Panc1 (cell line): ENCODE measurements at regions of chr3 and their contacts with region 1.

Region 1: GRCh38 chr3:184417619-184418327 is 37.9 kb downstream of the CHRD start:
- DNase-seq: peak; percentile 22
- ATAC-seq: peak; percentile 93
- H3K4me3 ChIP-seq: no peak overlapping the region
- H3K27ac ChIP-seq: no peak overlapping the region
- H3K4me1 ChIP-seq: no peaks in the 10 kb centered on the region
- H3K27me3 ChIP-seq: no peaks in the 10 kb centered on the region
- CTCF ChIP-seq: peak; percentile 98

Region 2: GRCh38 chr3:184405075-184406030 is 12.4 kb before region 1 on chr3:
- CTCF ChIA-PET with region 1: no interaction called
- POLR2A ChIA-PET with region 1: no interaction called
- in situ Hi-C with region 1: no loop called
- intact Hi-C with region 1: no loop called
- DNase-seq: no peak
- ATAC-seq: peak; percentile 23; the same call in 1 of the 2 replicates
- H3K4me3 ChIP-seq: no peak overlapping the region
- H3K27ac ChIP-seq: no peak overlapping the region
- H3K4me1 ChIP-seq: no peaks in the 10 kb centered on the region
- H3K27me3 ChIP-seq: peaks cover 2% of the 10 kb centered on the region; the same call in 1 of the 2 replicates
- CTCF ChIP-seq: no peak

Region 3: GRCh38 chr3:184513276-184514170 is 95.8 kb after region 1 on chr3:
- CTCF ChIA-PET with region 1: interaction called, 5 read pairs
- POLR2A ChIA-PET with region 1: no interaction called
- in situ Hi-C with region 1: no loop called
- intact Hi-C with region 1: loop called (anchors 1 kb)
- DNase-seq: peak; percentile 46
- ATAC-seq: peak; percentile 99
- H3K4me3 ChIP-seq: peak overlapping the region; percentile 31 to 50
- H3K27ac ChIP-seq: no peak overlapping the region
- H3K4me1 ChIP-seq: 0 out of 2 replicates have a peak, but pooled peaks cover 2% of the 10 kb centered on the region
- H3K27me3 ChIP-seq: peaks cover 58% of the 10 kb centered on the region
- CTCF ChIP-seq: peak; percentile 98

Region 4: DNA sequence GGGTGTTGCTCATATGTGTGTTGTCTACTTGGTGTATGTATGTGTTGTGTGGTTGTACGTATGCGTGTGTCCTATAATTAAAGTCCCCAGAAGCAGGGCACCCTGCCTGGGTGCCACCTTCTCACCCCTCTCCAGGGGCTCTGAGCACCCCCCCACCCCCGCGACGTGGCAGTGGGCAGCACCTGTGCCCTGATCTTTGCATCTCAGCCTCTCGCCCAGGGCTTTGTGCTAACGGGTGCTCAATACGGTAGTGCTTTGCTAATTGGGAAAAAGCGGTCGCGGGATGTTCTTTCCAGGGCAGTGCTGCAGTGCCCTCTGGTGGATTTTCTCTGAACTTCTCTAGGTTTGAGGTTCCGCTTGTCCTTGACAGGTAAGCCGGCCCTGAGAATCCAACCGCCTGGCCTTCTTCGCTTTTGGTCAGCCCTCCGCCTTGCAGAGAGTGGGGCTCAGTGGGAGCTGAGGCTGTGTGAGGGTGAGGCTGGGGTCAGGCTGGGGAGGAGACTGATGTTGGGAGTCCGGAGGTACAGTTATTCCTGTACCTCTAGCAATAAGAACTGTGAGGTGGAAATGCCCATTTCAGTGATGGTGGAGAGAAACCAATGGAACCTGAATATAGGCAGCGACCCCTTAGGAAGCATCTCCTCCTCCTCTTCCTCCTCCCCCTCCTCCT is 126.2 kb after region 1 on chr3:
- CTCF ChIA-PET with region 1: no interaction called
- POLR2A ChIA-PET with region 1: no interaction called
- in situ Hi-C with region 1: no loop called
- intact Hi-C with region 1: loop called (anchors 1 kb)
- DNase-seq: peak; percentile 76
- ATAC-seq: peak; percentile 85
- H3K4me3 ChIP-seq: no peak overlapping the region
- H3K27ac ChIP-seq: no peak overlapping the region
- H3K4me1 ChIP-seq: no peaks in the 10 kb centered on the region
- H3K27me3 ChIP-seq: 0 out of 2 replicates have a peak, but pooled peaks cover 5% of the 10 kb centered on the region
- CTCF ChIP-seq: peak; percentile 97

Region 5: DNA sequence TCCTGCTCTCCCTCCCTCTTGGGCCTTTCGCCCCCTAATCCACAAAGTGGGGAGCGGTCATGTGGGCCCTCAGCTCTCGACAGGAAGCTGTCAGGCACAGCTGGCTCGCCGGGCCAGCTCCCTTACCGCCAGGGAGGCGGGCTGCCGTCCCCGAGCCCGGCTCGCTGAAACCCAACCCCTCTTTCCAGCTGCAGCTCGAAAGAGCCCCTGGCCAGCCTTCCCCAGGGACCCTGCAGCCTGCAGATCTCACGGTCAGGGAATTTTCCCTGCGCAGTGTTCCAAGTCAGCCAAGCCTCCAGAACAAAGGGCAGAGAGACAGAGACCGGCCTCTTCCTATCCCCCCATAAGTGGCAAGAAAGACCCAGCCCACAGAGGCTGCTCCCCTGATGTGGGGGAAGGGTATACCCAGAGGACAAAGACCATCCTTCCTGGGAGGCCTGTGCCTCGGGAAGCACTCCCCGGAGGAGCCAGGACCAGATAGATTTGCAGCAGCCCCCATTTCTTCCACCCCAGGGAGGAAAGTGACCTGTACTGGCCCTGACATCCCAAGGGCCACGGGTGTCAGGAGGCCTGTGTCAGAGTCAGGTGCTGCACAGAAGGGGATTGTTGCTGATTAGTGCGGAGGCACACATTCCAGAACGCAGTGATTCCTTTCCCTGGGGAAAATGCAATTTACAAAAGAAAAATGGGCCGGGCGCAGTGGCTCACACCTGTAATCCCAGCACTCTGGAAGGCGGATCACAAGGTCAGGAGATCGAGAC is 261.5 kb after region 1 on chr3:
- CTCF ChIA-PET with region 1: no interaction called
- POLR2A ChIA-PET with region 1: no interaction called
- in situ Hi-C with region 1: no loop called
- intact Hi-C with region 1: no loop called
- DNase-seq: no peak
- ATAC-seq: no peak
- H3K4me3 ChIP-seq: no peak overlapping the region
- H3K27ac ChIP-seq: no peak overlapping the region
- H3K4me1 ChIP-seq: no peaks in the 10 kb centered on the region
- H3K27me3 ChIP-seq: 0 out of 2 replicates have a peak, but pooled peaks cover 2% of the 10 kb centered on the region
- CTCF ChIP-seq: no peak